ENCODE measurements at regions of chr11 and their contacts with region 1.

Region 1: DNA sequence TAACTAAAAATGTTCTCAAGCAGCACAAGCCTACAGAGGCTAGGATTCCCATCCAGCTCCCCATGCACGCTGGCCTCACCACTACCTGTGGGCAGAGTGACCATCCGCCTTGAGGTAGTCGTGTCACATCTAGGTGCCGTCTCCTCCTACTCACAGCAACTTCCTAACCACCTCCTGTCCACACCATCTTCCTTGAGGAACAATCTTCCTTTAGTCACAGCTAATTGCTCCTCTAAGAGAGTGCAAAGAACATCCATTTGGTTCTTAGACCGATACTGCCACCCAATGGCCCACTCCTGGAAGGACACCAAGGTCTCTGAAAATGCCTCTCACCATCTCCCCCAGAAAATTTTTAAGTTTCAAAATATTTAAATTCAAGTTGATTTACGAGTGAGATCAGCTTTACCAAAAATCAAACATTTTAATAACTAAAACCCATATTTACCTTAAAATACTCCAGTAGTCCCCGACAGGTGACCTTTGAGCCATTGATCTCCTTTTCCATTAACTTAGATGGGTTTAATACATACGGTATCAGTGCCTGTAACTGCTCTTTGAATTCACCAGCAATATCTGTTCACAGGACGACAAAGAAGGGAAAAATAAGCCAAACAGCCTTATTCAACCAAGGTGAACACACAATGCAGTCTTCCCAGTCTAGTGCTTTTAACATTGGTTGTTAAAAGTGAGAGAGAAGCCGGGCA is 21.7 kb upstream of the PLAAT3 start:
- DNase-seq: peak in 2 of 3 donors; percentile 57 to 72
- ATAC-seq: peak; percentile 87
- H3K4me3 ChIP-seq: no peak overlapping the region
- H3K4me1 ChIP-seq: peaks cover 5% of the 10 kb centered on the region
- CTCF ChIP-seq: peak; percentile 51

Region 2: GRCh38 chr11:63478896-63479295 is 157.0 kb before region 1 on chr11:
- intact Hi-C with region 1: loop called (anchors 2 to 10 kb)
- DNase-seq: peak in 1 of 3 donors; percentile 61
- ATAC-seq: peak; percentile 92
- H3K4me3 ChIP-seq: no peak overlapping the region
- H3K4me1 ChIP-seq: no peaks in the 10 kb centered on the region
- CTCF ChIP-seq: peak; percentile 70

Region 3: DNA sequence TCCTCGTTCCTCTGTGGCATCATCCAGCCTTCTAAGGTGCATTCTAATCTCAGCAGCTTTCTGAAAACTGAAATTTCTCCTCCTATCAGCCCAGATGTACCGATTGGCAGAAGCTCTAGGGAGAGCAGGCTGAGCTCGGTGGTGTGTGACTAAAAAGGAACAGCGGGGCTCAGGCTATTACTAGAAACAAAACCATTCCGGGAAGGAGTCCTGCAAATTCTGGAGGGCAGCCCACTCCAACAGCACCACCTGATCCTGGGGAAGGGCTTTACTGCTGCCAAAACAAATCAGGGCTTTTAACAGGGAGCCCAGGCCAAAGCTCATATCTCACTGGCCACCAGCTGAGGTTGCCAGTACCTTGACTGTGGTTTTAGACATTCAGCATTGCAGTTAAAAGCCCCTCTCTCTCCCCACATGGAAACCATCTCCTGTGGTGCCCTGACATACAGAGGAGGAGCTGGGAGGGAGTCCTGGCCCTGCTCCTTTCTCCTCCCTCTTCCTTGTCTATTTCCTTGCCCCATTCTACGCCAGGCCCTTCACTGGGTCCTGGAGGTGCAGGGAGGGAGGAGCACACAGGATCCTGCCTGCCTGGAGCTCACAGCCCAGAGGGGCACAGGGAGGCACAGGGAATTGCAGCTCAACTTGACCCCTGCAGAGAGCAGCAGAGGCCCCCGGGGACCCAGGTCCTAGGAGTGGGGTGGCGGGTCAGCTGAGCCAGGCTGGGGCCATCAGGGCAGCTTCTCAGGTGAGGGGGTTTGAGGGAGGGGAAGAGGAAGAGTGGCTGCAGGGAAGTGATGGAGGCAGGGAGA is 98.4 kb before region 1 on chr11:
- intact Hi-C with region 1: no loop called
- DNase-seq: no peak
- ATAC-seq: peak; percentile 37
- H3K4me3 ChIP-seq: no peak overlapping the region
- H3K4me1 ChIP-seq: peaks cover 19% of the 10 kb centered on the region
- CTCF ChIP-seq: no peak

Region 4: DNA sequence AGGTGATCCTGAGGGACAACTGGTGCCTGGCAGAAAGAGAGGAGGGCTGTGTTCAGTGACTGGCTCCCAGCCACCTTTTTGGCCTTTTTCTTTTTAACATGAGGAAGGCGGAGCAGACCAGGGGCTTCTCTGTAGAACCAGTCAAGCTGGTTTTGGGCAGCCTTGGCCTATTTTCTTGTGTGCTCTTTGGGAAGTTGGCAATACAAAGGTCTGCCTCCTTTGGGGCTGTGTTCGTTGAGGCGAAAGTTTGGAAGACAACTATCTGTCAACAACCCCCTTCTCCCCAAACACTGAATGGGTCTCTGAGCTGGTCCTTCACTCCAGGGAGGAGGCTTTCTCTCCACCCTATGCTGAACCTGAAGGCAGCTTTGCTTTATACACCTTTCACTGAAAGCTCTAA is 211.4 kb after region 1 on chr11:
- intact Hi-C with region 1: no loop called
- DNase-seq: peak in 1 of 3 donors; percentile 32
- ATAC-seq: peak; percentile 63
- H3K4me3 ChIP-seq: no peak overlapping the region
- H3K4me1 ChIP-seq: peaks cover 52% of the 10 kb centered on the region
- CTCF ChIP-seq: no peak

Measured in mucosa of descending colon (tissue), 3 donors.